ENCODE measurements at regions of chr3 and their contacts with region 1.

Region 1: GRCh38 chr3:16319307-16319706 is 54.3 kb downstream of the OXNAD1 start:
- DNase-seq: peak; percentile 91
- H3K4me3 Mint-ChIP-seq: no peak overlapping the region
- H3K27ac Mint-ChIP-seq: peak overlapping the region; percentile 80
- H3K4me1 Mint-ChIP-seq: peaks cover 64% of the 10 kb centered on the region
- H3K27me3 Mint-ChIP-seq: no peaks in the 10 kb centered on the region

Region 2: DNA sequence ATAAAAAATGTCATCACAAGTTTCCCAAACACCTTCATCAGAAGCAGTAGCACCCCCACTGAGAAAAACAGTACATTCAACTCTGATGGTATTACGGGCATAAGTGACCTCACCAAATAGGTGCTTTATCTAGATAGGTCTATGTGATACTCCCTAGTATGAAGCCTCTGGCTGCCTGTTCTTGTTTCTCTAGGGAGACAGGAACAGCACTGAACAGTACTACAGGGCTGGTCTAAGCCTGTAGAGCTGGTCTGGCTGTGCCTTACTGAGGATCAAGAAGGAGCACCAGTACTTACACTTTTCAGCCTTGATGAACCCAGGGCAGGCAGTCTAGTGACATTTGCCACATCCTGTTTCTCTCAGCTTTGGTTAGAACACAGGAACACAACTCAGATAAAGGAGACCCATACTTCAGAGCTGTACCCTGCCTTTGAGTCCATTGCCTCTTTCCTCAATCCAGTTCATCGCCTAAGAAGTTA is 18.4 kb before region 1 on chr3:
- CTCF ChIA-PET with region 1: interaction called, 228 read pairs
- POLR2A ChIA-PET with region 1: interaction called, 9 read pairs
- intact Hi-C with region 1: loop called (anchors 2 kb)
- DNase-seq: peak; percentile 62
- H3K4me3 Mint-ChIP-seq: peak overlapping the region; percentile 66
- H3K27ac Mint-ChIP-seq: peak overlapping the region; percentile 91
- H3K4me1 Mint-ChIP-seq: peaks cover 96% of the 10 kb centered on the region
- H3K27me3 Mint-ChIP-seq: no peaks in the 10 kb centered on the region

Region 3: GRCh38 chr3:16550676-16551341 is 231.5 kb after region 1 on chr3:
- CTCF ChIA-PET with region 1: interaction called, 20 read pairs
- POLR2A ChIA-PET with region 1: no interaction called
- intact Hi-C with region 1: loop called (anchors 1 kb)
- DNase-seq: peak; percentile 82
- H3K4me3 Mint-ChIP-seq: peak overlapping the region; percentile 3
- H3K27ac Mint-ChIP-seq: peak overlapping the region; percentile 59
- H3K4me1 Mint-ChIP-seq: peaks cover 3% of the 10 kb centered on the region
- H3K27me3 Mint-ChIP-seq: peaks cover 5% of the 10 kb centered on the region